Right ventricle myocardium inferior (tissue), 1 donor: ENCODE measurements at regions of chr7 and their contacts with region 1.

Region 1: GRCh38 chr7:55018361-55019190 is at the start of gene EGFR:
- DNase-seq: peak; percentile 84
- ATAC-seq: peak; percentile 86
- total RNA-seq, gene EGFR: 11.4 TPM

Region 2: GRCh38 chr7:54796150-54796549 is 222.4 kb before region 1 on chr7:
- intact Hi-C with region 1: loop called (anchors 10 kb)
- DNase-seq: no peak
- ATAC-seq: peak; percentile 16

Region 3: DNA sequence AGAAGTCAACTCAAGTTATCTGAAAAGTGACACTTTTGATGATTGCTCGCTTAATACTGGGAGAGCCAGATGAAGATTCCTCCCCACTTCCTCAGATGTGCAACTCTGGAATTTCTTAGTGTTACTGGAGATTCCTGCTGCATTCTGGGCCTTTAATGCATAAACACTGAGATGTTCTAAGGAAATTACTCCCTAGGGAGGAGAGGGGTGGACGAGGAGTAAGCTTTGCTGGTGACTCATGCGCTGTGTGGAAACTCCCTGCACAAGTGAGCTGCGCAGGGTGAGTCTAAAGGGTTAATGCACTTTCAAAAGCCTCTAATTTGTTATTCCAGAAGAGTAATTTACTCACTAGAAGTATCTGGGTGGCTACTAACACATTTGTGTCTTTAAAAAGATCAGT is 46.5 kb after region 1 on chr7:
- intact Hi-C with region 1: loop called (anchors 5 kb)
- DNase-seq: no peak
- ATAC-seq: peak; percentile 67

Region 4: DNA sequence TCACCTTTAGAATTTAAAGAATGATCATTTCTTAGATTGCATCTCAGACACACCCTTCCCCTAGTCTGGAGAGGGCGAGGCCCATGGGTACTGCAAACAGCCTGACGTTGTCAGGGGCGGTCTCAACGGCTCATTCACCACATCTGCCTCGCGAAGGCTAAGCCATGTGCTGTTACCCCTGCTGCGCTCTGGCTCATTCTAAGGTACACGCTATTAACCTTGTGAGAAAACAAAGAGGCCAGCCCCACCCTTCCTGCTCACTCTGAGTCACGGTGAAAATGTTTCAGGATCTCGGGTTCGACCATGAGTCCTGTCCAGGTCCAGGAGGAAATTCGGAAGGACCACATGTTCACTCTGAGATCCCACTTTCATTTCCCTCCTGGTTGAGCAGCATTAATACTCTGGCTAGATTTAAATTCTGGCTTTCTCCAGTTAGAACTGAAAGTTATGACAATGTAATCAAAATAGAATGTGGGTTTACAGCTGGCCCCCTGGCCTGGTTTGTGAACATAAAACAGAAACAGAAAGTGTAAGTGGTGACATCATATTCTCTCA is 55.4 kb after region 1 on chr7:
- intact Hi-C with region 1: loop called (anchors 5 kb)
- DNase-seq: no peak
- ATAC-seq: peak; percentile 50

Region 5: GRCh38 chr7:55132890-55133551 is 114.4 kb after region 1 on chr7:
- intact Hi-C with region 1: loop called (anchors 5 kb)
- DNase-seq: no peak
- ATAC-seq: no peak

Region 6: GRCh38 chr7:55245271-55245723 is 226.7 kb after region 1 on chr7:
- intact Hi-C with region 1: no loop called
- DNase-seq: no peak
- ATAC-seq: no peak